ENCODE measurements at regions of chr6 and their contacts with region 1.

Region 1: GRCh38 chr6:169789982-169790927 is 38.8 kb downstream of the ERMARD start:
- DNase-seq: peak; percentile 94
- H3K4me3 ChIP-seq: peak overlapping the region; percentile 51 to 54
- H3K27ac ChIP-seq: peak overlapping the region; percentile 5 to 28; a peak in 2 of 4 replicates
- H3K4me1 ChIP-seq: peaks cover 0 to 14% of the 10 kb centered on the region in 2 experiments; a peak in 1 of 4 replicates
- H3K27me3 ChIP-seq: no peaks in the 10 kb centered on the region
- CTCF ChIP-seq: peak; percentile 95
- EP300 ChIP-seq: no peak
- RAD21 ChIP-seq: peak; percentile 87

Region 2: DNA sequence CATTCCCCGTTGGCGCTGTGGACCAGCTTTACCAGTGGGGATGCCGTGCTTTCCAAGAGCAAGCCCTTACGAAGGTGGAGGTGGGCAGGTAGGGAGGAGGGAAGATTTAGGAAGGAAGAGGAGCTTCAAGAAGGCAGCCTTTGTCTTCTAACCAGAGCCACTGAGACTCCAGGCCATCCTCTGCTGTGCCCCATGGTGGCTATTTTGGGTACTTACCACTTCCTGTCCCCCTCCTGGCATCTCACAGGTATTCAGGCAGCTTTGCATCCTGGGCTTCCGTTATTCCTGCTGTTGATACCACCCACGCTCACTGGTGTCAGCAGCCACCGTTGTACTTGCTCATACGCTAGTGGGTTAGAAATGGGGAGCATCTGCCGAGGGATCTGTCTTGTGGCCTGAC is 15.9 kb before region 1 on chr6:
- CTCF ChIA-PET with region 1: interaction called, 26 read pairs
- POLR2A ChIA-PET with region 1: no interaction called
- DNase-seq: no peak
- H3K4me3 ChIP-seq: no peak overlapping the region
- H3K27ac ChIP-seq: no peak overlapping the region
- H3K4me1 ChIP-seq: no peaks in the 10 kb centered on the region
- H3K27me3 ChIP-seq: no peaks in the 10 kb centered on the region
- CTCF ChIP-seq: no peak
- EP300 ChIP-seq: no peak
- RAD21 ChIP-seq: no peak

Region 3: GRCh38 chr6:169800668-169801395 is 10.6 kb after region 1 on chr6:
- CTCF ChIA-PET with region 1: interaction called, 80 read pairs
- POLR2A ChIA-PET with region 1: interaction called, 3 read pairs
- DNase-seq: no peak
- H3K4me3 ChIP-seq: no peak overlapping the region
- H3K27ac ChIP-seq: no peak overlapping the region
- H3K4me1 ChIP-seq: no peaks in the 10 kb centered on the region; a peak in 1 of 4 replicates
- H3K27me3 ChIP-seq: 0 out of 2 replicates have a peak, but pooled peaks cover 6% of the 10 kb centered on the region
- CTCF ChIP-seq: no peak
- EP300 ChIP-seq: no peak
- RAD21 ChIP-seq: no peak

Region 4: GRCh38 chr6:169838346-169839028 is 48.2 kb after region 1 on chr6:
- CTCF ChIA-PET with region 1: interaction called, 40 read pairs
- POLR2A ChIA-PET with region 1: no interaction called
- DNase-seq: peak; percentile 85
- H3K4me3 ChIP-seq: peak overlapping the region in 1 of 2 experiments; percentile 17; a peak in 1 of 4 replicates
- H3K27ac ChIP-seq: no peak overlapping the region
- H3K4me1 ChIP-seq: peaks cover 0 to 17% of the 10 kb centered on the region in 2 experiments; a peak in 2 of 4 replicates
- H3K27me3 ChIP-seq: no peaks in the 10 kb centered on the region; the same call in 1 of the 2 replicates
- CTCF ChIP-seq: no peak
- EP300 ChIP-seq: no peak
- RAD21 ChIP-seq: peak; percentile 60

Region 5: DNA sequence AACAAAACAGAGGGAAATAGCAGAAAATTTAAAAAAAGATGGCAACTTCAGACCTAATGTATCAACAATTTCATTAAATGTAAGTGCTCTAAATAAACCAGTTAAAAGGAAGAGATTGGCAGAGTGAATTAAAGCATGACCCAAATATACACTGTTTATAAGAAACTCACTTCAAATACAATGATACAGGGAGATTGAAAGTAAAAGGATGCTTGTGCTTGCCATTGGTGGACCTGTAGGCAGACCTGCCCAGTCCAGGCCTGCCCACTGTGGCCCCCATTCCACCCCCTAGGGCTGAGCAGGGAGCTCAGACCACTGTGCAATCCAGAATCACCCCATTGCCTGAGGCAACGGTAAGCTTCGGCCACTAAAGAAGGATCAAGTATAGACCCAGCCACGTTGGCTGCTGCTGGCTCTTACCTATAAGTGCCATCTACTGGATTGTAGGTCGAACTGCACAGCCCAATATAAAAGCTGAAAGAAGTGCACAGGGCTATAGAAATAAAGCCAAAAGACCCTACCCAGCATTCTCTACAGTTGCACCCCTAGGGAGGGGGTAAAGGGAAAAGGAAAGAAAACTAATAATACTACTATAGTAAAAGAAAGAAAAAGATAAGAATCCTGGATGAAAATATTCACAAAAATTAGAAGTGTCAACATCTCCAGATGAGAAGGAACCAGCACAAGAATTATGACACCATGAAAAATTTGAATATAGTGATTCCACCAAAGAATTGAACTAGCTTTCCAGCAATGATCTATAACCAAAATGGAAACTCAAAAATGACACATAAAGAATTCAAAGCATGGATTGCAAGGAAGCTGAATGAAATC is 726.7 kb after region 1 on chr6:
- CTCF ChIA-PET with region 1: interaction called, 32 read pairs
- POLR2A ChIA-PET with region 1: no interaction called
- DNase-seq: peak; percentile 60
- H3K4me3 ChIP-seq: no peak overlapping the region; a peak in 1 of 4 replicates
- H3K27ac ChIP-seq: no peak overlapping the region
- H3K4me1 ChIP-seq: no peaks in the 10 kb centered on the region
- H3K27me3 ChIP-seq: no peaks in the 10 kb centered on the region
- CTCF ChIP-seq: peak; percentile 81
- EP300 ChIP-seq: no peak
- RAD21 ChIP-seq: peak; percentile 87

Region 6: GRCh38 chr6:170522565-170523183 is 732.4 kb after region 1 on chr6:
- CTCF ChIA-PET with region 1: interaction called, 32 read pairs
- POLR2A ChIA-PET with region 1: no interaction called
- DNase-seq: peak; percentile 51
- H3K4me3 ChIP-seq: no peak overlapping the region
- H3K27ac ChIP-seq: no peak overlapping the region
- H3K4me1 ChIP-seq: peaks cover 0 to 9% of the 10 kb centered on the region in 2 experiments; a peak in 1 of 4 replicates
- H3K27me3 ChIP-seq: no peaks in the 10 kb centered on the region
- CTCF ChIP-seq: peak; percentile 54
- EP300 ChIP-seq: no peak
- RAD21 ChIP-seq: peak; percentile 65

Region 7: GRCh38 chr6:170529839-170530469 is 739.7 kb after region 1 on chr6:
- CTCF ChIA-PET with region 1: interaction called, 79 read pairs
- POLR2A ChIA-PET with region 1: no interaction called
- DNase-seq: peak; percentile 70
- H3K4me3 ChIP-seq: no peak overlapping the region; a peak in 1 of 4 replicates
- H3K27ac ChIP-seq: peak overlapping the region in 1 of 2 experiments; percentile 28; a peak in 2 of 4 replicates
- H3K4me1 ChIP-seq: peaks cover 0 to 2% of the 10 kb centered on the region in 2 experiments; a peak in 1 of 4 replicates
- H3K27me3 ChIP-seq: no peaks in the 10 kb centered on the region
- CTCF ChIP-seq: peak; percentile 95
- EP300 ChIP-seq: no peak
- RAD21 ChIP-seq: peak; percentile 98